OCI-LY7 (cell line): ENCODE measurements at regions of chr17 and their contacts with region 1.

Region 1: GRCh38 chr17:70987867-70988340 is 818.6 kb downstream of the KCNJ2 start:
- DNase-seq: no peak
- H3K4me3 ChIP-seq: no peak overlapping the region
- H3K27ac ChIP-seq: no peak overlapping the region
- H3K4me1 ChIP-seq: no peaks in the 10 kb centered on the region
- CTCF ChIP-seq: no peak

Region 2: GRCh38 chr17:69018022-69018615 is 1969.8 kb before region 1 on chr17:
- CTCF ChIA-PET with region 1: no interaction called
- POLR2A ChIA-PET with region 1: no interaction called
- intact Hi-C with region 1: loop called (anchors 5 kb)
- DNase-seq: no peak
- H3K4me3 ChIP-seq: no peak overlapping the region
- H3K27ac ChIP-seq: no peak overlapping the region
- H3K4me1 ChIP-seq: no peaks in the 10 kb centered on the region
- CTCF ChIP-seq: no peak